ENCODE measurements at regions of chr3 and their contacts with region 1.

Region 1: GRCh38 chr3:72633101-72633500 is 215.1 kb downstream of the SHQ1 start:
- DNase-seq: no peak
- H3K4me3 ChIP-seq: no peak overlapping the region
- H3K27ac ChIP-seq: no peak overlapping the region
- H3K4me1 ChIP-seq: peaks cover 0 to 4% (median 1%) of the 10 kb centered on the region in 4 donors
- H3K27me3 ChIP-seq: no peaks in the 10 kb centered on the region
- CTCF ChIP-seq: no peak
- EP300 ChIP-seq: no peak
- POLR2A ChIP-seq: no peak

Region 2: GRCh38 chr3:72563690-72564370 is 69.3 kb before region 1 on chr3:
- in situ Hi-C with region 1: no loop called
- intact Hi-C with region 1: loop called (anchors 2 kb)
- DNase-seq: no peak
- H3K4me3 ChIP-seq: no peak overlapping the region
- H3K27ac ChIP-seq: no peak overlapping the region
- H3K4me1 ChIP-seq: peaks cover 0 to 7% (median 5%) of the 10 kb centered on the region in 4 donors
- H3K27me3 ChIP-seq: no peaks in the 10 kb centered on the region
- CTCF ChIP-seq: no peak
- EP300 ChIP-seq: no peak
- POLR2A ChIP-seq: no peak